ENCODE measurements at regions of chr11 and their contacts with region 1.

Region 1: DNA sequence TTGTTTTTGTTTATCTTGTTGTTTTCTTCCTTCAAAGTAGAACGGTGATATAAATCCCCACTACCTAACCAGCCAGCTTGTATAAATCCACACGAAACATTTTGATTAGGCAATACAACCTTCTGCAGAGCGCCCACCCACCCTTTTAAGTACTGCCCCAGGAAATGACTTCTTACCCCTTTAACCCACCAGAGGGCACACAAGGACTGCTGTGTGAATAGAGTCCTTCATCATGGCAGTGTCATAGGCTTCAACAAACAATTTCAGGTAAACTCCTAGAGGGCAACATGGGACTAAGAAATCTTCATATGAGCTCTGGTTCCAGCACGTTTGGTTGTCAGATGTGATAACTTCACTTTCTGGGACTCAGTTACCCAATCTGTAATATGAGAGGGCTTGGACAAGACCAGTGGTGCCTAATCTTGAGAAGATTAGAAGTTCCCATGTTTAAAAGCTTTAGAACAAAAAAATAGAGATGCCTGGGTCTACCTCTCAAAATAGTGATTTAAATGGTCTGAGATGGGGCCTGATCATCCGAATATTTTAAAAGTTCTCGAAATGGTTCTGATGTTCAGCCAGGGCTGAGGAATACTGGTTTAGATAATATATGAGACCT is 56.1 kb downstream of the PIWIL4 start:
- DNase-seq: no peak
- H3K4me3 ChIP-seq: no peak overlapping the region
- H3K27ac ChIP-seq: no peak overlapping the region
- H3K4me1 ChIP-seq: peaks cover 0 to 5% (median 0%) of the 10 kb centered on the region in 4 donors
- H3K27me3 ChIP-seq: no peaks in the 10 kb centered on the region
- CTCF ChIP-seq: peak; percentile 74 to 90 (median 76)
- EP300 ChIP-seq: no peak
- POLR2A ChIP-seq: no peak

Region 2: GRCh38 chr11:94537031-94537600 is 86.1 kb before region 1 on chr11:
- intact Hi-C with region 1: no loop called
- DNase-seq: no peak
- H3K4me3 ChIP-seq: no peak overlapping the region
- H3K27ac ChIP-seq: no peak overlapping the region
- H3K4me1 ChIP-seq: no peaks in the 10 kb centered on the region
- H3K27me3 ChIP-seq: peaks cover 0 to 5% (median 0%) of the 10 kb centered on the region in 3 donors
- CTCF ChIP-seq: no peak
- EP300 ChIP-seq: no peak
- POLR2A ChIP-seq: no peak

Region 3: DNA sequence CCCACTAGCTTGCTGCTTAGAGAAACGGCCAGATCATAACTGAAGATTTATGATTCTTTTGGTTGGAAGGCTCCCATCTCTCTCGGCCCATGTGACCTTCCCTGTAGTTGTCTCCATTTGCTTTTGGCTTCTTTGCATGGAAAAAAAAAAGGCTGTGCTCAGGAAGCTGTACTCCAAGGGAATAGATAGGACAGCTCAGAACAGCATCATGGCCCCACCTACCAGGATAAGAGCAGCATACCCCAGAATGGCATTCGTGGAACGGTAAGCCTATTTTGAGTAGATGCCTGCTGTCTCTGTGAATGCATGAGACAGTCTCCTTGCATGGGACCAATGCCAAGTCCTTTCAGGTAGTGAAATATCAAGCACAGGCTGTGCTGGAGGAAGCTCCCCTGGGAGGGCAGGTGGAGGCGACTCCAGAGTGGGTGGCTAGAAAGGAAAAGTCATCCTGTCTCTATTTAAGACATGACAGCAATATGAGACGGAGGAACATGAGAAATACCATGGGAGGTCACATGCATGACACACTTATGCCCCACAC is 50.8 kb after region 1 on chr11:
- intact Hi-C with region 1: no loop called
- DNase-seq: no peak
- H3K4me3 ChIP-seq: no peak overlapping the region
- H3K27ac ChIP-seq: peak overlapping the region in 2 of 4 donors; percentile 19 to 30
- H3K4me1 ChIP-seq: peaks cover 0 to 14% (median 12%) of the 10 kb centered on the region in 4 donors
- H3K27me3 ChIP-seq: no peaks in the 10 kb centered on the region
- CTCF ChIP-seq: no peak
- EP300 ChIP-seq: no peak
- POLR2A ChIP-seq: no peak

Region 4: DNA sequence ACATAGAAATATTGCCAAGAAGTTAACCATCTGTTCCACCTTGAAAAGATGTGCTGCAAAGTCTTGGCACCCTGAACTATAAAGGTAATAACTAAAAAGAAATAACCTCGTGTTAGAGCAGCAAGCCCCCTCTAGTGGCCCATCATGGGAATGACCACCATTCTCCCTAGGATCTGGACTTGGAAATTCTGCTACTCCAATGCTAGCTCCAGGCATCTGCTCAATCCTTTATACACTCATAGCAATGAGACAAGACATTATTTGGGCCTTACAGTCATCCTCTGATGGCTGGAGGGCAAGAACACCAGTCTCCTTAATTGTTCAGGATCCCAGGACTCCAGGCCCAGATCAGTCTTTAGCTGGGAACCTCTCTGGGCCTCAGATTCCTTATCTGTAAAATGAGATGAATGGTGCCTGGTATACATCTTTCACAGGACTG is 274.1 kb after region 1 on chr11:
- intact Hi-C with region 1: loop called (anchors 1 kb)
- DNase-seq: peak; percentile 76
- H3K4me3 ChIP-seq: no peak overlapping the region
- H3K27ac ChIP-seq: no peak overlapping the region
- H3K4me1 ChIP-seq: peaks cover 0 to 9% (median 0%) of the 10 kb centered on the region in 4 donors
- H3K27me3 ChIP-seq: no peaks in the 10 kb centered on the region
- CTCF ChIP-seq: peak; percentile 29 to 86 (median 76)
- EP300 ChIP-seq: no peak
- POLR2A ChIP-seq: no peak

Region 5: GRCh38 chr11:95108159-95108611 is 485.0 kb after region 1 on chr11:
- intact Hi-C with region 1: no loop called
- DNase-seq: no peak
- H3K4me3 ChIP-seq: no peak overlapping the region
- H3K27ac ChIP-seq: peak overlapping the region; percentile 14 to 64 (median 21)
- H3K4me1 ChIP-seq: no peaks in the 10 kb centered on the region
- H3K27me3 ChIP-seq: no peaks in the 10 kb centered on the region
- CTCF ChIP-seq: no peak
- EP300 ChIP-seq: no peak
- POLR2A ChIP-seq: no peak

Region 6: DNA sequence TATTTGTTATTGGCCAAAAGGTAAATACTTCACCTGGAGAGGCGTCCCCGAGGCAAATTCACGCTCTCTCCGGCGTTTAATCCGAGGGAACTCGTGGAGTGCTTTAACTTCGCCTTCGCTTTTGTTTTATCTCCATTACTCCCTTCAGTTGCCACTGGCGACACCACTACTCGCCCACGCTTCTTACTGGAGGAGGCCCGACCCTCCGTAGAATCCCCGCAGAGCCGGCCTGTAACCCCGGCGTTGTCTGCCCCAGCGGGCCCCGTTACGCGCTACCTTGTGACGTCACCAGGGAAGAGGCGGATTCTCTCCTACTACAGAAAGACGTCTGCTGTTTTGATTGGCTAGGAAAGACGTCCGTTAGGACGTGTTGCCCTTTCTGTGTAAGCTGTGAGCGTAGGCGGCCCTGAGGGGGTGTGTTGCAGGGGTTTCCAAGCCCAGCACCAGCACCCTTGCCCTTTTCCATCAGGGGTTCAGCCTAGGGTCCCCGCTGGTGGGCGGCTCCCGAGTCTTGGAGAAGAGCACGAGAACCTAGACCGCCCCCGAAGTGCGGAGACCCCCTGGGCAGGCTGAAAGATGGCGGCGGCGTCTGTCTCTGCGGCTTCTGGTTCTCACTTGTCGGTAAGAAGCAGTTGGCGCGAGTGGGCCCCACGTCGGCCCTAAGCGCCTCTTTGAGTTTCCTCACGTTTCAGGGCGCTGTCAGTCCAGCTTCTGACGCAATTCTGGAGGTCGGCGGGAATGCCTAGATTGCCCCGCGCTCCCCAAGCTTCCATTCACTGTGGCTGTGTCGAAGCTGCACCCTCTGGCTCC is 1167.1 kb after region 1 on chr11 and contains the start of gene CEP57:
- intact Hi-C with region 1: loop called (anchors 10 kb)
- DNase-seq: peak; percentile 98
- H3K4me3 ChIP-seq: peak within 1 kb of the TSS; percentile 70 to 91 (median 88)
- H3K27ac ChIP-seq: peak within 1 kb of the TSS; percentile 96 to 99 (median 98)
- H3K4me1 ChIP-seq: peaks cover 0 to 28% (median 22%) of the 10 kb centered on the region in 4 donors
- H3K27me3 ChIP-seq: no peaks in the 10 kb centered on the region
- CTCF ChIP-seq: no peak
- EP300 ChIP-seq: no peak
- POLR2A ChIP-seq: peak; percentile 43 to 45
- total RNA-seq, gene CEP57: 35.8 to 71.3 (median 41.0) TPM